ENCODE measurements at regions of chr1 and their contacts with region 1.

Region 1: GRCh38 chr1:110034451-110035235 is at the start of gene STRIP1:
- DNase-seq: peak; percentile 96
- ATAC-seq: peak; percentile 93
- H3K4me3 ChIP-seq: peak within 1 kb of the TSS; percentile 71 to 99 (median 93)
- H3K4me3 Mint-ChIP-seq: peak within 1 kb of the TSS; percentile 97
- H3K27ac ChIP-seq: peak within 1 kb of the TSS; percentile 76 to 95
- H3K27ac Mint-ChIP-seq: peak within 1 kb of the TSS; percentile 93
- H3K4me1 ChIP-seq: peaks cover 25 to 31% of the 10 kb centered on the region in 2 donors
- H3K4me1 Mint-ChIP-seq: peaks cover 43% of the 10 kb centered on the region
- H3K27me3 ChIP-seq: no peaks in the 10 kb centered on the region
- H3K27me3 Mint-ChIP-seq: no peaks in the 10 kb centered on the region
- CTCF ChIP-seq: no peak
- total RNA-seq, gene STRIP1: 97.5 and 105 TPM in 2 replicates

Region 2: DNA sequence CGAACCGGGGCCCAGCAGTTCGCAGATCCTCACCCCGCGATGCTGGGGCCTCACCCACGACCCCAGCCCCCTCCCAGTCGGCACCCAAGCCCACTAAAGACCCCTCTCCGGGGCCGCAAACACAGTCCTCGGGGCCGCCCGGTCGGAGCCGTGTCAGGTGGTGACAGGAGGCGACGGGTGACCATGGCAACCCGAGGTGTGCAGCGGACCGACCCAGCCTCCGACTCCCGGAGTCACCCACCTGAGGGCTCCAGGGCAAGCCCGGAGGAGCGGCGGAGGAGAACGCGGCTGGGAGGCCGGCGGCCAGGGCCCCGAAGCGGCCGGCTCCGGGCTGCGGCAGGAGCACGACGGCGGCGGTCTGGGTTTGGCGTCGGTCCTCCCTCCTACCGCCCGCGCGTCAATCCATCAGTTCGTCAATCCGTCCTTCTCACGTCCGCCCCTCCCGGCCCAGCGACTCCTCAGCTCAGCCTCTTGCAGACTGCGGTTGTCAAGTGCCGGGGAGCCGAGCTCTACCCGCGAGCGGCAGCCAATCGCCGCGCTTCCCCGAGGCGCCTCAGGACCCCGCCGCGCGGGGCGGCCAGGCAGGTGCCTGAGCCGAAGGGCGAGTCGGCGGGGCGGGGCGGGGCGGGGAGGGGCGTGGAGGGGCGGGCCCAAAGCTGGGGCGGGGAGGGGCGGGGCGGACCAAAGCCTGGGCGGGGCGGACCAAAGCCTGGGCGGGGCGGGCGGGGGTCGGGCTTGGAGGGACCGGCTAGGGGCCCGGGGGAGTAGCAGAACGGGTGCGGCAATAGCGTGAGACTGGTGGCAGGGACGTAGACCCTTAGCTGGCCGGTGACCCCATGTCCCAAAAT is 992.8 kb before region 1 on chr1 and contains the start of gene WDR47:
- CTCF ChIA-PET with region 1: no interaction called
- POLR2A ChIA-PET with region 1: no interaction called
- intact Hi-C with region 1: no loop called
- DNase-seq: peak; percentile 96
- ATAC-seq: peak; percentile 96
- H3K4me3 ChIP-seq: peak within 1 kb of the TSS; percentile 30 to 93 (median 92)
- H3K4me3 Mint-ChIP-seq: peak within 1 kb of the TSS; percentile 97
- H3K27ac ChIP-seq: peak within 1 kb of the TSS; percentile 67 to 75
- H3K27ac Mint-ChIP-seq: peak within 1 kb of the TSS; percentile 95
- H3K4me1 ChIP-seq: peaks cover 7% of the 10 kb centered on the region in 2 donors
- H3K4me1 Mint-ChIP-seq: peaks cover 16% of the 10 kb centered on the region
- H3K27me3 ChIP-seq: no peaks in the 10 kb centered on the region
- H3K27me3 Mint-ChIP-seq: peaks cover 3% of the 10 kb centered on the region
- CTCF ChIP-seq: no peak
- total RNA-seq, gene WDR47: 17.3 and 21.6 TPM in 2 replicates

Region 3: DNA sequence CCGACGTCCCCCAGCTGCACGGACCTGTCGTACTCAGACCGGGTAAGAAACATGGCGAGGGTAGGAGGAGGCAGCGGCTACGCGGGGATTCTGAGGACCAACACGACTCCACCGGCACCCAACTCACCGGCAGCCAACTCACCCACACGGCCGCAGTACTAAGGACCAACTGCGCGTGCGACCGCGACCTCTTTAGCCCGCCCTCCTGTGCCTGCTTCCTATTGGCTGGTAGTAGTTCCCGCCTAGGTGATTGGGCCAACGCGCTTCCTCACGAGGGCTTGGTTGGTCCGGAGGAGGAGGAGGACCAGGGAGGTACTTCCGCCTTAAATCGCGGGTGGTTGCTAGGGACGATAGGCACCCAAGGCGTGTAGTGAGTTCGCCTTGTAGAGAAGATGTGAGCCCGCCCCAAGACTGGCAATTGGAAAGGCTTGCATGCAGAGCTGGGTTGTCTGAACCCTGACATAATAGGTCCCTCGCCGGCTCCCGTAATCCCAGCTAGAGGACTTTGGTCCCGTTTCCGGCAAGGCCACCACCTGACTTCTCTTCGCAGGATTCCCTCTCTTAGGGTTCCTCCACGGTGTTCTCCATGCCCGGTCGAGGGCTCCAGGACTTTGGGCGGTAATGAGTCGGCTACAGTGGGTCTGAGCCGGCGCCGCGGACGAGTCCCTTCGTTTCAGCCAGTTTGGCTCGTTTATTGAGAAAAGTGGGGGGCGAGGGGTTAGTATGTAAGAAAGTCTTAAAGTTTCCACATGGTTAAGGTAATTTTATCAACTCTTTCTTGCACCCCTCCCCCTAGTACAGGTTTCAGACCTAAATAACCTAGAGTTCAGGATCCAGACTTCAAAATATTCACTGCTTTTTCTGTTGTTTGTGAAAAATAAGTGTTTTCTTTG is 608.1 kb before region 1 on chr1 and contains the start of gene PSMA5:
- CTCF ChIA-PET with region 1: no interaction called
- POLR2A ChIA-PET with region 1: no interaction called
- intact Hi-C with region 1: loop called (anchors 1 kb)
- DNase-seq: peak; percentile 97
- ATAC-seq: peak; percentile 95
- H3K4me3 ChIP-seq: peak within 1 kb of the TSS; percentile 72 to 98 (median 79)
- H3K4me3 Mint-ChIP-seq: peak within 1 kb of the TSS; percentile 98
- H3K27ac ChIP-seq: peak within 1 kb of the TSS; percentile 71 to 82
- H3K27ac Mint-ChIP-seq: peak within 1 kb of the TSS; percentile 98
- H3K4me1 ChIP-seq: peaks cover 13 to 19% of the 10 kb centered on the region in 2 donors
- H3K4me1 Mint-ChIP-seq: peaks cover 33% of the 10 kb centered on the region
- H3K27me3 ChIP-seq: no peaks in the 10 kb centered on the region
- H3K27me3 Mint-ChIP-seq: no peaks in the 10 kb centered on the region
- CTCF ChIP-seq: no peak
- total RNA-seq, gene PSMA5: 58.3 and 62.9 TPM in 2 replicates

Region 4: DNA sequence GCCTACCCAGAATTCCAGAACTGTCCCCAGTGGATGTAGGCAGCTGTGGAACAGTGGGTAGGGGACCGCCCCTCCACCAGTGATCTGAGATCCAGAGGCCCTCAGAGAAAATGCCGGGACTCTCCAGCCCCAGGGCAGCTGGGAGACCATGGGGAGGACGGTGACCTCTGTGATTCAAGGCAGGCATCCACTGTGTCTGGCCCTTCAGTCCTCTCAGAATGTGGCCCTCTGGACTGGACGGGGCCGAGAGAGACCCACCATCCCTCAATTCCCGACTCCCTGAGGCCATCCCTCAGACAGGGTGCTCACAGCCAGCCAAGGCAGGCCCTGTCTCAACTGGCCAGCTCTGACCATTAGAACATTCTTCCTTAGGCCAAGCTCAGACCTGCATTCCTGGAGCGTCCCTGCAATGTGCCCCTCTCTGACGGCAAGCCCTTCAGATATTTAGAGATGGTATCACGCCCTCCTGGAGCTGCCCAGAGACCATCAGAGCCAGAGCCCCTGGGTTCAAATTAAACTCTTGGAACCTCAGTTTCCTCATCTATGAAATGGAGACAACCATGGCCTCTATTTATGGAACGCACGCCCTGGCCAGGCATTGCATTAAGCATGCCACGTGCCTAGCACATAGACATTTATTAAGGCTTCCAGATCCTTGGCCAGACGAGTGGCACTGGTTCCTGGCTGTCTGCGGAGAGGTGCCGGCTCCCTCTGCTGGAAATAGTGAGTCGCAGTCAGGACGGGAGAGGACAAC is 261.3 kb before region 1 on chr1:
- CTCF ChIA-PET with region 1: interaction called, 20 read pairs
- POLR2A ChIA-PET with region 1: interaction called, 5 read pairs
- intact Hi-C with region 1: no loop called
- DNase-seq: peak; percentile 79
- ATAC-seq: peak; percentile 81
- H3K4me3 ChIP-seq: no peak overlapping the region
- H3K4me3 Mint-ChIP-seq: no peak overlapping the region
- H3K27ac ChIP-seq: no peak overlapping the region
- H3K27ac Mint-ChIP-seq: no peak overlapping the region
- H3K4me1 ChIP-seq: peaks cover 0 to 11% of the 10 kb centered on the region in 2 donors
- H3K4me1 Mint-ChIP-seq: no peaks in the 10 kb centered on the region
- H3K27me3 ChIP-seq: peaks cover 0 to 8% (median 0%) of the 10 kb centered on the region in 4 experiments
- H3K27me3 Mint-ChIP-seq: peaks cover 7% of the 10 kb centered on the region
- CTCF ChIP-seq: peak; percentile 63

Region 5: GRCh38 chr1:109877320-109877771 is 157.3 kb before region 1 on chr1:
- CTCF ChIA-PET with region 1: no interaction called
- POLR2A ChIA-PET with region 1: no interaction called
- intact Hi-C with region 1: no loop called
- DNase-seq: no peak
- ATAC-seq: peak; percentile 34
- H3K4me3 ChIP-seq: no peak overlapping the region
- H3K4me3 Mint-ChIP-seq: peak overlapping the region; percentile 34
- H3K27ac ChIP-seq: no peak overlapping the region
- H3K27ac Mint-ChIP-seq: peak overlapping the region; percentile 70
- H3K4me1 ChIP-seq: peaks cover 20% of the 10 kb centered on the region in 2 donors
- H3K4me1 Mint-ChIP-seq: peaks cover 20% of the 10 kb centered on the region
- H3K27me3 ChIP-seq: peaks cover 0 to 23% (median 11%) of the 10 kb centered on the region in 4 experiments
- H3K27me3 Mint-ChIP-seq: peaks cover 28% of the 10 kb centered on the region
- CTCF ChIP-seq: no peak

Region 6: DNA sequence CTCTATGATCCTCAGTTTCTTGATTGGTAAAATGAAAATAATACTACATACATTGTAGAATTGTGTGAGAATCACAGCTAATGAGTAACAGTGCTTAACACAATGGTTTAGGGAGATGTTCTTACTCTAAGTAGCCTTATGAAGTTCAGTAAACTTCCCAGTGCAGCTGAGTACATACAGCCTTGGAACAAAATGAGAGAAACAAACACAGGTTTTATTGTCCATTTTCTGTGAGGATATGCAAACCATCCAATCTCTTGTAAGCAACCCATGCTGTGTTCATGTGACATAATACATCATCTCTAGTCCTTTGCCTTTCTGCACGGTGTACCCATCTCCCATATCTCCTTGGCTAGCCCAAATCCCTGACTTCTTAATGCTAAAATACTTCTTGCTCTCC is 14.9 kb before region 1 on chr1:
- CTCF ChIA-PET with region 1: interaction called, 52 read pairs
- POLR2A ChIA-PET with region 1: interaction called, 4 read pairs
- intact Hi-C with region 1: no loop called
- DNase-seq: no peak
- ATAC-seq: no peak
- H3K4me3 ChIP-seq: no peak overlapping the region
- H3K4me3 Mint-ChIP-seq: no peak overlapping the region
- H3K27ac ChIP-seq: no peak overlapping the region
- H3K27ac Mint-ChIP-seq: no peak overlapping the region
- H3K4me1 ChIP-seq: peaks cover 0 to 6% of the 10 kb centered on the region in 2 donors
- H3K4me1 Mint-ChIP-seq: peaks cover 10% of the 10 kb centered on the region
- H3K27me3 ChIP-seq: no peaks in the 10 kb centered on the region
- H3K27me3 Mint-ChIP-seq: no peaks in the 10 kb centered on the region
- CTCF ChIP-seq: no peak

Region 7: DNA sequence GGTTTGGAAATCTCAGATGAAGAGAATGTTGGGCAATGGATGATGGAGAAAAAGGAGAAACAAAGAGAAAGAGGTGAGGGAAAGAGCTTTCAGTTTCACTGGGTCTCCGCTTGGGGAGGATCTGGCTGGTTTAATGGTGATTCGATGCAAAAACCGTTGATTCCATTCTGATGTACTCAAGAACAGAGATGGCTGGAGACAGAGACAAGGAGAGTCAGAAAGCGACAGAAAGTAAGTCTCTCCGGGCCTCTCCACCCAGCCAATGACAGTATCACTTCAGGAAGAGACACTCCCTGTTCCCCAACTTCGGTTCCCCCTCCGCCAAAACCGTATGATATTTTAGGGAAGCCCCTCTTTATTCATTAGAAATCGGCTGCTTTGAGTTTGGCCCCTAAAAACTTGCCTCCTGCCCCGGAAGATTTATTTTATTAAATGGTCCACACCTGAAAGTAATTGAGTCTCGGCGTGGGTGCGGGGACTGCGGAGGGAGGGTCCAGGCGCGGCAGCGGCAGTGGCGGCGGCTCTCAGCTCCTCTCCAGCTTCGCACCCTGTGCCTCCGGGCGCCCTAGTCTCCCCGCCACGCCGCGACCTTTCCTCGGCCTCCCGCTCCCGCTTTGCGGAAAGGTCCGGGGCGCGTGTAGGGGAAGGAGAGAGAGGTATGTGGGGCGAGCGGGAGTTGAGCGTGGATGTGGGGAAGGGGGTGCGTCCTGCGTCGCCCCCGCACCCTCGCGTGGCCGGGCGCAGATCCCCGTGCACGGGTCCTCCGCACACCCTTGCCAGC is 49.0 kb after region 1 on chr1:
- CTCF ChIA-PET with region 1: no interaction called
- POLR2A ChIA-PET with region 1: no interaction called
- intact Hi-C with region 1: no loop called
- DNase-seq: peak; percentile 42
- ATAC-seq: peak; percentile 15
- H3K4me3 ChIP-seq: peak overlapping the region; percentile 54 to 79 (median 58)
- H3K4me3 Mint-ChIP-seq: peak overlapping the region; percentile 81
- H3K27ac ChIP-seq: no peak overlapping the region
- H3K27ac Mint-ChIP-seq: no peak overlapping the region
- H3K4me1 ChIP-seq: peaks cover 12 to 21% of the 10 kb centered on the region in 2 donors
- H3K4me1 Mint-ChIP-seq: peaks cover 11% of the 10 kb centered on the region
- H3K27me3 ChIP-seq: peaks cover 0 to 64% (median 27%) of the 10 kb centered on the region in 4 experiments
- H3K27me3 Mint-ChIP-seq: peaks cover 62% of the 10 kb centered on the region
- CTCF ChIP-seq: no peak

Region 8: GRCh38 chr1:110106013-110106941 is 71.6 kb after region 1 on chr1:
- CTCF ChIA-PET with region 1: interaction called, 18 read pairs
- POLR2A ChIA-PET with region 1: no interaction called
- intact Hi-C with region 1: loop called (anchors 1 kb)
- DNase-seq: peak; percentile 76
- ATAC-seq: peak; percentile 83
- H3K4me3 ChIP-seq: no peak overlapping the region
- H3K4me3 Mint-ChIP-seq: no peak overlapping the region
- H3K27ac ChIP-seq: no peak overlapping the region
- H3K27ac Mint-ChIP-seq: no peak overlapping the region
- H3K4me1 ChIP-seq: peaks cover 16 to 24% of the 10 kb centered on the region in 2 donors
- H3K4me1 Mint-ChIP-seq: peaks cover 27% of the 10 kb centered on the region
- H3K27me3 ChIP-seq: no peaks in the 10 kb centered on the region
- H3K27me3 Mint-ChIP-seq: peaks cover 20% of the 10 kb centered on the region
- CTCF ChIP-seq: peak; percentile 93

Region 9: DNA sequence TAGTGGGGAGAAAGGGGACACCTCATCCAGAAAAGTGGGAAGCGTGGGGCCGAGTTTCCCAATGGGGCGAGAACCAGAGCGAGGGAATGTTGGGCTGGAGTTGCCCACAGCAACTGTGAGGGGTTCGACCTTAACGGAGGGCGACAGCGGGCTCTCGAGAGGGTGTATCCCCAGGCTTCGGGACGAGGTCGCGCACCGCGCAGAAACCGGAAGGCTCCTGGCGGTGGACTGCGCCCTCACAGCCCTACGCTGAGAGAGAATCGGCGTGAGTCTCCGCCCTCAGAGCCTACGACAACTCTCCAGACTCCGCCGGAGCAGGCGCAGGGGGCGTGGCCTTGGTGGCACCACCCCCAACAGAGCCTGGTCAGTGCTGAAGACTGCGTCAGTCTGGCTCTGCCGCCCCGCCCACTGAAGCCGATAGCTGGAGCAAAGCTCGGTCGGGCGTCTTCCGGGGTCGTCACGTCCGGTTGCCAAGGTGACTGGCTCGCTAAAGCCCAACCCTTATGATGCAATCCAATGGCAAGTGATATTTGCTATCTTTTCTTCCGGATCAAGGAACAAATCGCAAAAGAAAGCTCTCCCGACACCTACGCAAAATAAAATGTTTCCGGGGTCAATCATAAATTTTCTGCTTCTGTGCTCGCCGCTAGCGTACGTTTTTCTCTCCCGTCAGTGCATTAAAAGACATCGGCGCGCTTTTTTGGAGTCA is 929.2 kb after region 1 on chr1 and contains the start of gene LRIF1:
- CTCF ChIA-PET with region 1: no interaction called
- POLR2A ChIA-PET with region 1: no interaction called
- intact Hi-C with region 1: loop called (anchors 5 kb)
- DNase-seq: peak; percentile 100
- ATAC-seq: peak; percentile 96
- H3K4me3 ChIP-seq: peak within 1 kb of the TSS; percentile 62 to 98 (median 82)
- H3K4me3 Mint-ChIP-seq: peak within 1 kb of the TSS; percentile 83
- H3K27ac ChIP-seq: peak within 1 kb of the TSS; percentile 95 to 98
- H3K27ac Mint-ChIP-seq: peak within 1 kb of the TSS; percentile 88
- H3K4me1 ChIP-seq: peaks cover 20 to 21% of the 10 kb centered on the region in 2 donors
- H3K4me1 Mint-ChIP-seq: peaks cover 30% of the 10 kb centered on the region
- H3K27me3 ChIP-seq: peaks cover 0 to 13% (median 7%) of the 10 kb centered on the region in 4 experiments
- H3K27me3 Mint-ChIP-seq: peaks cover 10% of the 10 kb centered on the region
- CTCF ChIP-seq: peak; percentile 60
- total RNA-seq, gene LRIF1: 22.6 and 26.5 TPM in 2 replicates

Measured in B cell (primary cell).